B cell (primary cell): ENCODE measurements at regions of chr10 and their contacts with region 1.

Region 1: GRCh38 chr10:3873728-3874461 is 88.9 kb upstream of the KLF6 start:
- DNase-seq: peak; percentile 93
- ATAC-seq: peak; percentile 56
- H3K4me3 ChIP-seq: peak overlapping the region in 1 of 5 experiments; percentile 37
- H3K4me3 Mint-ChIP-seq: peak overlapping the region; percentile 57
- H3K27ac ChIP-seq: peak overlapping the region; percentile 89 to 99
- H3K27ac Mint-ChIP-seq: peak overlapping the region; percentile 98
- H3K4me1 ChIP-seq: peaks cover 44 to 50% of the 10 kb centered on the region in 2 donors
- H3K4me1 Mint-ChIP-seq: peaks cover 50% of the 10 kb centered on the region
- H3K27me3 ChIP-seq: no peaks in the 10 kb centered on the region
- H3K27me3 Mint-ChIP-seq: no peaks in the 10 kb centered on the region
- CTCF ChIP-seq: no peak

Region 2: GRCh38 chr10:3482200-3483138 is 391.4 kb before region 1 on chr10:
- CTCF ChIA-PET with region 1: no interaction called
- POLR2A ChIA-PET with region 1: no interaction called
- intact Hi-C with region 1: loop called (anchors 10 kb)
- DNase-seq: peak; percentile 17
- ATAC-seq: no peak
- H3K4me3 ChIP-seq: peak overlapping the region in 1 of 5 experiments; percentile 10
- H3K4me3 Mint-ChIP-seq: peak overlapping the region; percentile 26
- H3K27ac ChIP-seq: no peak overlapping the region
- H3K27ac Mint-ChIP-seq: peak overlapping the region; percentile 39
- H3K4me1 ChIP-seq: peaks cover 60 to 65% of the 10 kb centered on the region in 2 donors
- H3K4me1 Mint-ChIP-seq: peaks cover 62% of the 10 kb centered on the region
- H3K27me3 ChIP-seq: no peaks in the 10 kb centered on the region
- H3K27me3 Mint-ChIP-seq: no peaks in the 10 kb centered on the region
- CTCF ChIP-seq: no peak

Region 3: DNA sequence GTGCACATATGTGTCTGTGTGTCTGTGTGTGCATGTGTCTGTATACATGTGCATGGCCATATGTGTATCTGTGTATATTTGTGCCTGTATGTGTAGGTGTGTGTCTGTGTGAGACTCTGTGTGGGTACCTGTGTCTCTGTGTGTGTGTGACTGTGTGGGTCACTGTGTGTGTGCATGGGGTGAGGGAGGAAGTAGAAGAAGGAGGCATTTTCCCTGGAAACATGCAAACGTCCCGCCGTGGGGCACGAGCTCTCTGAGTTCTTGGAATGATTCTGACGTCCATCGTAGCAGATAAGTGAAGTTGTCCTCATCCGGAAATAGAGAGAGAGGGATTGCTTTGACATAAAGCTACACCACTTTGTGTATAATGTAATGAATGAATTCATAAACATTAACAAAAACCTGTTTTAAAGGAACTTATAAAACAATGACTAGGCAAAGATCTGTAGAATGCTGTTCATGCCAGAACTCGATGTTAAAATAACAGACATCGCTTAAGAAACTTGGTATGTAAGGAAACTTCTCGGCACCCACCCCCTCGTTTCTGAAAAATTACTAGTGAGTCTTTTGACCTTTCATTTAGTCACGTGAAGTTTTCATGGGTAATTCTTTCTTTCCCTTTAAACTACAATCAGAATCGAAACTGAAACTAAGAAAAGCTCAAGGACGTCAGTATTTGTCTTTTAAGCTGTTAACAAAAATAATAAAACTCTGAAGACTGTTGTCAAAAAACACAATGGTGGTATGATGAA is 45.3 kb before region 1 on chr10:
- CTCF ChIA-PET with region 1: no interaction called
- POLR2A ChIA-PET with region 1: no interaction called
- intact Hi-C with region 1: loop called (anchors 1 kb)
- DNase-seq: peak; percentile 65
- ATAC-seq: peak; percentile 43
- H3K4me3 ChIP-seq: peak overlapping the region; percentile 39 to 66 (median 53)
- H3K4me3 Mint-ChIP-seq: peak overlapping the region; percentile 78
- H3K27ac ChIP-seq: peak overlapping the region; percentile 28 to 39
- H3K27ac Mint-ChIP-seq: peak overlapping the region; percentile 57
- H3K4me1 ChIP-seq: peaks cover 11 to 15% of the 10 kb centered on the region in 2 donors
- H3K4me1 Mint-ChIP-seq: peaks cover 20% of the 10 kb centered on the region
- H3K27me3 ChIP-seq: no peaks in the 10 kb centered on the region
- H3K27me3 Mint-ChIP-seq: no peaks in the 10 kb centered on the region
- CTCF ChIP-seq: no peak

Region 4: GRCh38 chr10:3892440-3893425 is 18.8 kb after region 1 on chr10:
- CTCF ChIA-PET with region 1: interaction called, 3 read pairs
- POLR2A ChIA-PET with region 1: no interaction called
- intact Hi-C with region 1: loop called (anchors 2 kb)
- DNase-seq: peak; percentile 37
- ATAC-seq: peak; percentile 45
- H3K4me3 ChIP-seq: no peak overlapping the region
- H3K4me3 Mint-ChIP-seq: peak overlapping the region; percentile 30
- H3K27ac ChIP-seq: peak overlapping the region in 1 of 2 donors; percentile 18
- H3K27ac Mint-ChIP-seq: peak overlapping the region; percentile 33
- H3K4me1 ChIP-seq: peaks cover 9 to 21% of the 10 kb centered on the region in 2 donors
- H3K4me1 Mint-ChIP-seq: peaks cover 28% of the 10 kb centered on the region
- H3K27me3 ChIP-seq: no peaks in the 10 kb centered on the region
- H3K27me3 Mint-ChIP-seq: no peaks in the 10 kb centered on the region
- CTCF ChIP-seq: no peak

Region 5: DNA sequence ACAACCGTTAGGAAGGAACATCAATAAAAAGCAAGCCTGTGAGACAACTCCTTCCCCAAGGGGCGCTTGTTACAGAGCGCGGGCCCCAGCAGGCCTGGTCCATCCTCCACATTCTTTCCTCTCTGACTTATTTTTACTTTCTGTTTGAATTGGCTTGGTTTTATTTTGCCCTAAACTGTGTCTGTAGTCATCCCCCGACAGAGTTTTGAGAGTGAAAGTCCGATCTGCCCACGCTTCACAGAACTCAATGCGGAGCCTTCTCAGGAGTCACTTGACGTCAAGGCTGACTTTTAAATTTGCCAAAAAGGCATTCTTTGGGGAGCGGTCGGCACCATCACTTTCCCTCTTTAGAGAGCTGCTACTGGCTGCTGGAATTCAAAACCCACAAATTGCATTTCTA is 61.2 kb after region 1 on chr10:
- CTCF ChIA-PET with region 1: interaction called, 4 read pairs
- POLR2A ChIA-PET with region 1: no interaction called
- intact Hi-C with region 1: loop called (anchors 1 kb)
- DNase-seq: peak; percentile 78
- ATAC-seq: peak; percentile 97
- H3K4me3 ChIP-seq: peak overlapping the region in 4 of 5 experiments; percentile 10 to 51 (median 40)
- H3K4me3 Mint-ChIP-seq: peak overlapping the region; percentile 72
- H3K27ac ChIP-seq: peak overlapping the region; percentile 68
- H3K27ac Mint-ChIP-seq: peak overlapping the region; percentile 87
- H3K4me1 ChIP-seq: peaks cover 13 to 21% of the 10 kb centered on the region in 2 donors
- H3K4me1 Mint-ChIP-seq: peaks cover 27% of the 10 kb centered on the region
- H3K27me3 ChIP-seq: no peaks in the 10 kb centered on the region
- H3K27me3 Mint-ChIP-seq: no peaks in the 10 kb centered on the region
- CTCF ChIP-seq: no peak

Region 6: DNA sequence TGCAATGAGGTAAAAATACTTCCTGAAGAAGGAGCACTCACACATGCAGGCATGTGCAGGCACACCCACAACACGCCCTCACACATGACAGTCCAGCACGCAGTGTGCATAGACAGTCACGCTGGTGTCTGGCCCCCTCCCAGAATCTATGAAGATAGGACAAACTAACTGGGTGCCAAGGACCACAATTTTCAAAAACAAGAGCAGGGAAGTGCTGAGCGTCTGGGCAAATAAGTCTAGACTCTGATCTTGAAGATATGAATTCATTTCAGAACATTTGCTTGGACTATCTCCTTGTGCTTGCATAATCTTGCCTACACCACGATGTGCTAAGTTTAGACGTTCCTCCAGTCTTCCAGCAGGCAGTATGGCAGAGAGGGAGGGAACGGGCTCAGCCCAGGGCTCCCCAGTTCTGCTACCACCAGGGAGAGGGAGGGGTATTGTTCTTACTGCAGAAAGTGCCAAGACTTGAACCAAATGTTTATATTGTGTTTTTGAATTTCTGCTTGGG is 187.6 kb after region 1 on chr10:
- CTCF ChIA-PET with region 1: no interaction called
- POLR2A ChIA-PET with region 1: no interaction called
- intact Hi-C with region 1: no loop called
- DNase-seq: no peak
- ATAC-seq: no peak
- H3K4me3 ChIP-seq: no peak overlapping the region
- H3K4me3 Mint-ChIP-seq: no peak overlapping the region
- H3K27ac ChIP-seq: no peak overlapping the region
- H3K27ac Mint-ChIP-seq: no peak overlapping the region
- H3K4me1 ChIP-seq: peaks cover 7 to 12% of the 10 kb centered on the region in 2 donors
- H3K4me1 Mint-ChIP-seq: peaks cover 15% of the 10 kb centered on the region
- H3K27me3 ChIP-seq: no peaks in the 10 kb centered on the region
- H3K27me3 Mint-ChIP-seq: no peaks in the 10 kb centered on the region
- CTCF ChIP-seq: no peak

Region 7: GRCh38 chr10:4131407-4132228 is 257.7 kb after region 1 on chr10:
- CTCF ChIA-PET with region 1: no interaction called
- POLR2A ChIA-PET with region 1: no interaction called
- intact Hi-C with region 1: loop called (anchors 10 kb)
- DNase-seq: peak; percentile 79
- ATAC-seq: peak; percentile 71
- H3K4me3 ChIP-seq: peak overlapping the region in 4 of 5 experiments; percentile 0 to 51 (median 32)
- H3K4me3 Mint-ChIP-seq: no peak overlapping the region
- H3K27ac ChIP-seq: peak overlapping the region; percentile 21 to 71
- H3K27ac Mint-ChIP-seq: no peak overlapping the region
- H3K4me1 ChIP-seq: peaks cover 70 to 71% of the 10 kb centered on the region in 2 donors
- H3K4me1 Mint-ChIP-seq: peaks cover 45% of the 10 kb centered on the region
- H3K27me3 ChIP-seq: no peaks in the 10 kb centered on the region
- H3K27me3 Mint-ChIP-seq: no peaks in the 10 kb centered on the region
- CTCF ChIP-seq: no peak

Region 8: DNA sequence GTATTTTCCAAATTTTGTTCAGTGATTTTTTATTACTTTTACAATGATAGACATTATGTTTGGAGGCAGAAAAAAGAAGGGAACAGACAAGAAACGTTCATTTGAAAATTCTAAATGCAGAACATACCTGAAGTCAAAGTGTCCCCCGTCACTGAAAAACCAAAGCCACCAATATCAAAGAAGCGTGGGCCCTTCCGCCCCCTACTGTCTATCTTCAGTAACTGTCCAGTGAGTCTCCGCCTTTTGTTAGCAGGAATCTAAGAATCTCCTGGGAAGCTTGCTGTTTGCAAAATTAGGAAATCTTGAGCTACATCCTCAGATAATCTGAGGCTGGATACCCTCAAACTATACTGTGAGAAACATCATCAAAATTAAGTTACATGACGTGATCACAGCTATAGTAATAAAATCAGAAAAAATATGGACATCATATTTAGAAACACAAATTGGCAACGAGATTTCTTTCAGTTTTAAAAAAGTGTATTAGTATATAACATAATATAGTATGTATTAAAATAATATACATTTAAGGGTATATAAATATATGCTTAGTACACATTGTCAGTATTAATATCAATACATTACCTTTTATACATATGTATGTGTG is 782.8 kb after region 1 on chr10:
- CTCF ChIA-PET with region 1: no interaction called
- POLR2A ChIA-PET with region 1: no interaction called
- intact Hi-C with region 1: loop called (anchors 10 kb)
- DNase-seq: peak; percentile 69
- ATAC-seq: peak; percentile 56
- H3K4me3 ChIP-seq: no peak overlapping the region
- H3K4me3 Mint-ChIP-seq: no peak overlapping the region
- H3K27ac ChIP-seq: no peak overlapping the region
- H3K27ac Mint-ChIP-seq: no peak overlapping the region
- H3K4me1 ChIP-seq: no peaks in the 10 kb centered on the region
- H3K4me1 Mint-ChIP-seq: peaks cover 6% of the 10 kb centered on the region
- H3K27me3 ChIP-seq: no peaks in the 10 kb centered on the region
- H3K27me3 Mint-ChIP-seq: peaks cover 10% of the 10 kb centered on the region
- CTCF ChIP-seq: peak; percentile 97